Breast epithelium (tissue), 4 donors: ENCODE measurements at regions of chr9 and their contacts with region 1.

Region 1: GRCh38 chr9:33816327-33817252 is at the start of gene UBE2R2:
- DNase-seq: peak; percentile 82 to 93
- H3K4me3 ChIP-seq: peak within 1 kb of the TSS; percentile 84 to 91 (median 90)
- H3K27ac ChIP-seq: peak within 1 kb of the TSS; percentile 98 to 99
- H3K4me1 ChIP-seq: peaks cover 0 to 9% of the 10 kb centered on the region in 2 donors
- H3K27me3 ChIP-seq: no peaks in the 10 kb centered on the region
- CTCF ChIP-seq: peak in 1 of 3 donors; percentile 10
- POLR2A ChIP-seq: peak; percentile 48
- total RNA-seq, gene UBE2R2: 21.2 to 35.0 (median 22.6) TPM

Region 2: DNA sequence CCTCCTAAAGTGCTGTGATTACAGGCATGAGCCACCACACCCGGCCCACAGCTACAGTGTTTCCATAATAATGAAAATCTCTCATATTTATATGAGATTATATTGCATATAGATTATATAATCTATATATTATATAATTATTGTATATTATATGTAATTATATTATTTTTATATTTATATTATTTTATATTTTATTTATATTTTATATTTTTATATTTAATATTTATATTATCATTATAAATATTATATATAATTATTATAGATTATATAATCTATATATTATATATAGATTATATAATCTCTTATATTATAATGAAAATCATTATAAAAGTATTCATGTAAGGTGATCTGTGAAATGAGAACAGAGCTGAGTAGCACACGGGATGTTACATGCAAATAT is 281.0 kb before region 1 on chr9:
- intact Hi-C with region 1: no loop called
- DNase-seq: no peak
- H3K4me3 ChIP-seq: no peak overlapping the region
- H3K27ac ChIP-seq: no peak overlapping the region
- H3K4me1 ChIP-seq: no peaks in the 10 kb centered on the region
- H3K27me3 ChIP-seq: no peaks in the 10 kb centered on the region
- CTCF ChIP-seq: no peak
- POLR2A ChIP-seq: no peak

Region 3: DNA sequence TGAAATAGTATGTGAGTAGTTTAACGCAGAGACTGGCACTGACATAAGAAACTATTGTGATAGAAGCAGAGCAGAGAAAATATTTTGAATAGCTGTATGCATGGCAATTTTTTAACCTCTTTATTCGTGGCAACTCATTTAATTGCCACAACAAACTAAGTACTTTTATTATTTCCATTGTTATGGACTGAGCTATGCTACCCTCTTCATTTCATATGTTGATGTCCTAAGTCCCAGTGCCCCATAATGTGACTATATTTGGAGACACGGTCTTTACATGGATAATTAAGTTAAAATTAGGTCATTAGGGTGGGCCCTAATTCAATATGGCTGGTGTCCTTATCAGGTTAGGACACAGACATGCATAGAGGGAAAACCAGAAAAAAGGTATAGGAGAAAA is 107.3 kb before region 1 on chr9:
- intact Hi-C with region 1: no loop called
- DNase-seq: no peak
- H3K4me3 ChIP-seq: no peak overlapping the region
- H3K27ac ChIP-seq: no peak overlapping the region
- H3K4me1 ChIP-seq: no peaks in the 10 kb centered on the region
- H3K27me3 ChIP-seq: no peaks in the 10 kb centered on the region
- CTCF ChIP-seq: no peak
- POLR2A ChIP-seq: no peak

Region 4: GRCh38 chr9:33785913-33786312 is 30.7 kb before region 1 on chr9:
- intact Hi-C with region 1: no loop called
- DNase-seq: no peak
- H3K4me3 ChIP-seq: no peak overlapping the region
- H3K27ac ChIP-seq: no peak overlapping the region
- H3K4me1 ChIP-seq: no peaks in the 10 kb centered on the region
- H3K27me3 ChIP-seq: no peaks in the 10 kb centered on the region
- CTCF ChIP-seq: no peak
- POLR2A ChIP-seq: no peak

Region 5: DNA sequence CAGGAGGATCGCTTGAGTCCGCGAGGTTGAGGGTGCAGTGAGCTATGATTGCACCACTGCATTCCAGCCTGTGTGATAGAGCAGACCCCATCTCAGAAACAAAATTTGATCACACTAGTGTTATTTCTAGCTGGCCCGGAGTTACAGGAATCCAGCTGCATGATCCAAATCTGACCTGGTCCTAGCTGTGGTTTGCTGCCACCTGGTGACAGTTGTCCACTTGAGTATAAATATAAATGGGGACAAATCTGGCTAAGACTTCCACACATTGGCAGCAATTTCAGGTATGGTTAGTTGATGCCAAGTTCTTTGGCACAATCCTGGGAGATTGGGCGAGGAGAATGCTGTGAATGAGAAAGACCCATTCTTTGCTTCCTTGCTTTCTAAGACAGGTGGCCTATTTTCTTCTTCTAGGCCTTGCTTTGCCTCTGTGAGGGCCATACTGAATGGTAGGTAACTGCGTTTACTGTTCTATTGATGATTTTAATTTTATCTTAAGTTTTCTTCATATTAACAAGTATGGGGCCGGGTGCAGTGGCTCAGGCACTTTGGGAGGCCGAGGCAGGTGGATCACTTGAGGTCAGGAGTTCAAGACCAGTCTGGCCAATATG is 35.7 kb after region 1 on chr9:
- intact Hi-C with region 1: loop called (anchors 5 kb)
- DNase-seq: peak; percentile 66 to 82
- H3K4me3 ChIP-seq: no peak overlapping the region
- H3K27ac ChIP-seq: peak overlapping the region; percentile 14 to 60
- H3K4me1 ChIP-seq: peaks cover 0 to 12% of the 10 kb centered on the region in 2 donors
- H3K27me3 ChIP-seq: no peaks in the 10 kb centered on the region
- CTCF ChIP-seq: peak; percentile 52 to 71 (median 70)
- POLR2A ChIP-seq: no peak